ENCODE measurements at regions of chr14 and their contacts with region 1.

Region 1: GRCh38 chr14:34199564-34199963 is 248.7 kb upstream of the EGLN3 start:
- DNase-seq: peak; percentile 16
- H3K4me3 Mint-ChIP-seq: no peak overlapping the region
- H3K27ac Mint-ChIP-seq: peak overlapping the region; percentile 68
- H3K4me1 Mint-ChIP-seq: peaks cover 54% of the 10 kb centered on the region
- H3K27me3 Mint-ChIP-seq: peaks cover 25% of the 10 kb centered on the region

Region 2: DNA sequence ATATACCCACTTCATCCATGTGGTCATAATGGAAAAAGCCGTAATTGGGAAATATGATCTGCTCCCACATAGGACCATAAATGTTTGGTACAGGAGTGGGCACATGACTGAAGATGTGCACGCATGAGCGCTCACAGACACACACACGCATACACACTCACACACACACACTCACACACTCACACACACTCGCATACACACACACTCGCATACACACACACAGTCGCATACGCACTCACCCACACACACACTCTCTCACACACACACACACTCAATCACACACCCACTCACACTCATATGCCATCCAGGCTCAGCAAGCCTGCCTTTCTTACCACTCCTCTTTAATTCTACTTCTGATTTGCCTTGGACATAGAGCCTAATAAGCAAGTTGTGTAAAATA is 203.1 kb before region 1 on chr14:
- intact Hi-C with region 1: no loop called
- DNase-seq: no peak
- H3K4me3 Mint-ChIP-seq: no peak overlapping the region
- H3K27ac Mint-ChIP-seq: no peak overlapping the region
- H3K4me1 Mint-ChIP-seq: peaks cover 5% of the 10 kb centered on the region
- H3K27me3 Mint-ChIP-seq: peaks cover 23% of the 10 kb centered on the region

Region 3: GRCh38 chr14:34018564-34019244 is 180.9 kb before region 1 on chr14:
- intact Hi-C with region 1: loop called (anchors 2 kb)
- DNase-seq: peak; percentile 9
- H3K4me3 Mint-ChIP-seq: peak overlapping the region; percentile 82
- H3K27ac Mint-ChIP-seq: peak overlapping the region; percentile 93
- H3K4me1 Mint-ChIP-seq: peaks cover 34% of the 10 kb centered on the region
- H3K27me3 Mint-ChIP-seq: no peaks in the 10 kb centered on the region

Region 4: GRCh38 chr14:34051966-34052657 is 147.5 kb before region 1 on chr14:
- intact Hi-C with region 1: loop called (anchors 5 kb)
- DNase-seq: no peak
- H3K4me3 Mint-ChIP-seq: peak overlapping the region; percentile 13
- H3K27ac Mint-ChIP-seq: peak overlapping the region; percentile 47
- H3K4me1 Mint-ChIP-seq: peaks cover 69% of the 10 kb centered on the region
- H3K27me3 Mint-ChIP-seq: peaks cover 7% of the 10 kb centered on the region

Region 5: DNA sequence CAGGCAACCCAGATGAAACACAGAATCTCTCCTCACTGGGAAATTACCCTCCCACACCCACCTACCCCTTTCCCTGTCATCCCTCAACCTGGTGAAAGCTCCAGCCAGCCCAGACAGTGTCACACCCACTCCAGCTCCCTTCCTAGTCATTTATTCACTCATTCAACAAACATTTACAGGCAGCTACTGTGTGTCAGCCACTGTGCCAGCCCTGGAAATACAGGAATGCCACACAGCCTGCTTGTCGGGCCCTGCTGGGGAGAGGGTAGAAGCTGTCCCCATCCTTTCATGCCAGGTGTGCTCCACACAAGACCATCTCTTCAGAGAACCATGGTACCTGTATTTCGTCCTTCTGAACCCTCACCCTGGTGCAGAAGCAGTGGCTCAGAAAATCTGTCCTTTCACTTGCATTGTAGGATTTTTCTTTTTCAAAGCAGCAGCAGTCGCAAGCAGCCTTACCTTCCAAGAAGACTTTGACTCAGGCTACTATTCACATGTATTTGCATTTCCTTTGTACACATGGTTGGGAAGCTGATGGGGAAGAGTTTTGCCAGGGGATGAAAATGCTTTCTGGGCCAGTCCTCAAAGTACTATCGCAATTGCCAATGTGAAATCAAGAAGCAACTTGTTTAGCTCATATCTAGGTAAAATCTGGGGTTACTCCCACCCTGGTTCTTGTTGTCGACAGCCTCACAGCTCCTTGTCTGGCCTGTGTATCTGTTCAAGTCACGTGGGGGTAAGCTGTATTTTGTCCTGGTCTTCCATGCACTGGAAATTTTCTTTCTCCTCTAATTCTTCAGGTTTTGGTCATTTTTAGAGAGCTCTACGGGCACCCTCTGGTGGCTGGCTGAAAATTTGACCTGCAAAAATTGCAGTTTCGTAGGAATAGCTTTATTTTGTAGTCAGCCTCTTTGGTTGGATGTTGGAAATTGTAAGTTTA is 101.2 kb before region 1 on chr14:
- intact Hi-C with region 1: loop called (anchors 2 kb)
- DNase-seq: peak; percentile 14
- H3K4me3 Mint-ChIP-seq: no peak overlapping the region
- H3K27ac Mint-ChIP-seq: no peak overlapping the region
- H3K4me1 Mint-ChIP-seq: peaks cover 57% of the 10 kb centered on the region
- H3K27me3 Mint-ChIP-seq: peaks cover 2% of the 10 kb centered on the region

Region 6: GRCh38 chr14:34211732-34212131 is 12.2 kb after region 1 on chr14:
- intact Hi-C with region 1: loop called (anchors 1 kb)
- DNase-seq: no peak
- H3K4me3 Mint-ChIP-seq: no peak overlapping the region
- H3K27ac Mint-ChIP-seq: peak overlapping the region; percentile 62
- H3K4me1 Mint-ChIP-seq: peaks cover 32% of the 10 kb centered on the region
- H3K27me3 Mint-ChIP-seq: peaks cover 34% of the 10 kb centered on the region

Region 7: DNA sequence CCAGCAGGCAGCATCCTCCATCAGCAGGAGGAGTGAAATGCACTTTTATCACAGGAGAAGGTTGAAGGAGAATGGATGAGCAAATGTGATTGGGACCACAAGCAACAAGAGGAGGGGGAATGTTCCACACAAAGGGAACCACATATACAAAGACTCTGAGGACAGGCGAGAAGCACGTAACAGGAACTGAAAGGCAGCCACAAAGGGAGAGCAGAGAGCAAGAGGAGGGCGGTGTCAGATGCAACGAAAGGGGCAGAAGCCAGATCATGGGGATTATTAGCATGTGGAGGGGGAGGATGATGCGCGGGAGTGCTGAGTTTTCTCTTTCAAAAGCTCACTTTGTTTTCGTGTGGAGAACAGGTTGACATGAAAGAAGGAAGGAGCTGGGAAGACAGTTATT is 21.4 kb after region 1 on chr14:
- intact Hi-C with region 1: loop called (anchors 2 kb)
- DNase-seq: peak; percentile 19
- H3K4me3 Mint-ChIP-seq: no peak overlapping the region
- H3K27ac Mint-ChIP-seq: peak overlapping the region; percentile 15
- H3K4me1 Mint-ChIP-seq: peaks cover 18% of the 10 kb centered on the region
- H3K27me3 Mint-ChIP-seq: peaks cover 15% of the 10 kb centered on the region

Region 8: DNA sequence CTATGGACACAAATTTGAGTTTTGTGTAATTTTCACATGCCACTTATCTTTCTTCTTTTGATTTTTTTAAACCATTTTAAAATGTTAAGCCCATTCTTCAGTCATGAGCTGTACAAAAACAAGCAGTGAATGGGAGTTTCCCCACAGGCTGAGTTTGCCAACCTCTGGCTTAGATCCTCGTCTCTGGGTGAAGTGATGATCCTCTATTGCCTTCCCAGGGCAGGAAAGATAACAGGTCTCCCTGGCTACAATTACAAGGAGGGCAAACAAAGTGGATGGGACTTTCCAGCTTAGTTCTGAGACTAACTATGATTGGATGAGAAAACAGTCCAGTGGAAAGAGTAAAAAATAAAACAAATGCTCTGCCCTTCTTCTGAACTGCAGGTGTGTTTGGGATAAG is 58.8 kb after region 1 on chr14:
- intact Hi-C with region 1: no loop called
- DNase-seq: no peak
- H3K4me3 Mint-ChIP-seq: no peak overlapping the region
- H3K27ac Mint-ChIP-seq: no peak overlapping the region
- H3K4me1 Mint-ChIP-seq: no peaks in the 10 kb centered on the region
- H3K27me3 Mint-ChIP-seq: peaks cover 13% of the 10 kb centered on the region